ENCODE measurements at regions of chr17 and their contacts with region 1.

Region 1: GRCh38 chr17:38674749-38675615 is at the start of gene EPOP:
- DNase-seq: no peak
- H3K4me3 ChIP-seq: peak within 1 kb of the TSS; percentile 53
- CTCF ChIP-seq: no peak

Region 2: DNA sequence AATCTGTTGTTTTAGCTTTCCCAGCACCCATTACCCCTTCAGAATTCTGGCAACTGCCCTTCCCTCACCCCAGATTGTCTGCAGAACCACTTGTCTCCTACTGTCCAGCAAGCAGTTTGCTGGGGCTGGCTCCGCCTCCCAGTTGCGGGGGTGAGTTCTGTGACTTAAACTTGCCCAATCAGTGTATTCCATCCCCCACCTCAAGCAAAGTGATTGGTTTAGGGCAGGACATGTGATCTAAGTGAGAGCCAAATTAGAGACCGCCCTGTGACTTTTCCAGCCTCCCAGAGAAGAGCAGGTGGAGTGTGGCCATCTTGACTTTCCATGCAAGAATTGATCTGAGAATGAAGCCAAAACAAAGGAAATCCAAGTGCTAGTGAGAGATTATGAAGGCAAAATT is 46.5 kb before region 1 on chr17:
- CTCF ChIA-PET with region 1: no interaction called
- POLR2A ChIA-PET with region 1: no interaction called
- DNase-seq: no peak
- H3K4me3 ChIP-seq: no peak overlapping the region
- CTCF ChIP-seq: no peak

Region 3: DNA sequence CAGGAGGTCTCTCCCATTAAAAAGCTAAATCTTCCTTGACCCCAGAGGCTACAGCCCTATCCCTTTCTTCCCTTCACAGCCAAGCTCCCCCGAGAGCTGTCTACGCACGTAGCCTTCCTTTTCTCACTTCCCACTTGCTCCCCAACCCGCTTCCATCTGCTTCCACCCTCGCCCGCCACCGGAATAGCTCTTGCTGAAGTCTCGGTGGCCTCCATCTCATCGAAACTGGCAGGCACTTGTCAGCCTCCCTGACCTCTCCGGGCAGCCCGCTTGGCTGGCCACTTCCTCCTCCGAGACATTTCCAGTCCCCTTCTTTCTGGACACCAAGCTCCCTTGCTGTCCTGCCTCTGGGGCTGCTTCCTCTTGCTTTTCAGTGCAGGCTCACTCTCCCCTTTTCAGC is 10.5 kb after region 1 on chr17:
- CTCF ChIA-PET with region 1: interaction called, 15 read pairs
- POLR2A ChIA-PET with region 1: no interaction called
- DNase-seq: no peak
- H3K4me3 ChIP-seq: no peak overlapping the region
- CTCF ChIP-seq: no peak